Activated CD8-positive, alpha-beta T cell treated with anti-CD3 and anti-CD28 coated beads for 36 hours (primary cell): ENCODE measurements at regions of chr13 and their contacts with region 1.

Region 1: DNA sequence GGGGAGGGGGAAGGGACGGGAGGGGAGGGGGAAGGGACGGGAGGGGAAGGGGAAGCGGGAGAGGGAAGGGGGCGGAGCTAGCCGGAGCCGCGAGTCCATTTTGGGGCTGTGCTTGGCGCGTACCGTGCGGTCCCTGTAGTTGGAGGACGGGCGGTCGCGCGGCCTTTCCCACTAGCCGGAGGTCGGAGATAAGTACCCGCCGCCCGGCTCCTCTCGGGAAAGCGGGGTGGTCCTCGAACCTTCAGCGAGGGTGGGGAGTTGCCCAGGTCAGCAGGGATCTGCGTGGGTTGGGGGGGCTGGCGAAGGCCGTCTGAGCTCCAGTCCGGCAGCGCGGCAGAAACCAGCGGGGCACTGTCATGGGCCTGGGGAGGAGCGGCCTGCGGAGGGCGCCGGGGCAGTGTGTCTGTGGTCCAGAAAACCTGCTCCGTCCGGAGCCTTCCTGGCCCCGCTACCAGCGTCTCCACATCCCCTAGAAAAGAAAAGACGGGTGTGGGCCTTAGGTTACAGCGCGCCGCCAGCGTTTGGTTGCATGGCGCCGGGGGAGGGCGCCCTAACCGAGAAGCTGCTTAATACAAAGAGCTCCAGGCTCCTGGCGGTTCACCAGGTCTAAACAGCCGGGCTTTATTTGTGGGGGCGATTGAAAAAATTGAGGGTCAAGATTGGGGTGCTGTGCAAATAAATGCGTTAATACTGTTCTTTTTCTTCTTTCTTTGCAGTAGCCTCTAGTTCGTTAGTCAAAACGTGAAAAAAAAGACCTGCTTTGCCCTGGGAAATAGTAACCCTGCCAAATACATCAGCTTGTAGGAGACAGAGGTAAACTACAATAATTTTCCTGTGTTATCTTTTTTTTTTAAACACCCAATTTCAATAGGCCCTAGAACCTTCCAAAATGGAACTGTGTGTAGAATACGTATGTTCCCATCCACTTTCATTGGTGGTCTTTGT is at the start of gene TRIM13:
- DNase-seq: peak; percentile 91
- ATAC-seq: peak; percentile 86
- H3K4me3 Mint-ChIP-seq: peak within 1 kb of the TSS; percentile 86
- H3K27ac Mint-ChIP-seq: peak within 1 kb of the TSS; percentile 91
- H3K4me1 Mint-ChIP-seq: peaks cover 32% of the 10 kb centered on the region
- H3K27me3 Mint-ChIP-seq: no peaks in the 10 kb centered on the region
- CTCF ChIP-seq: peak; percentile 80
- total RNA-seq, gene TRIM13: 12.5 to 13.4 TPM

Region 2: GRCh38 chr13:49585220-49586157 is 411.7 kb before region 1 on chr13 and contains the start of gene RCBTB1:
- CTCF ChIA-PET with region 1: no interaction called
- POLR2A ChIA-PET with region 1: no interaction called
- intact Hi-C with region 1: no loop called
- DNase-seq: peak; percentile 66
- ATAC-seq: peak; percentile 92
- H3K4me3 Mint-ChIP-seq: peak within 1 kb of the TSS; percentile 91
- H3K27ac Mint-ChIP-seq: peak within 1 kb of the TSS; percentile 86
- H3K4me1 Mint-ChIP-seq: peaks cover 23% of the 10 kb centered on the region
- H3K27me3 Mint-ChIP-seq: no peaks in the 10 kb centered on the region
- CTCF ChIP-seq: no peak
- total RNA-seq, gene RCBTB1: 14.2 to 14.6 TPM

Region 3: GRCh38 chr13:49936085-49936940 is 60.9 kb before region 1 on chr13 and contains the start of gene SPRYD7:
- CTCF ChIA-PET with region 1: interaction called, 12 read pairs
- POLR2A ChIA-PET with region 1: interaction called, 7 read pairs
- intact Hi-C with region 1: no loop called
- DNase-seq: peak; percentile 96
- ATAC-seq: peak; percentile 99
- H3K4me3 Mint-ChIP-seq: peak within 1 kb of the TSS; percentile 80
- H3K27ac Mint-ChIP-seq: peak within 1 kb of the TSS; percentile 85
- H3K4me1 Mint-ChIP-seq: peaks cover 13% of the 10 kb centered on the region
- H3K27me3 Mint-ChIP-seq: peaks cover 1% of the 10 kb centered on the region
- CTCF ChIP-seq: peak; percentile 89
- total RNA-seq, gene SPRYD7: 6.3 to 6.7 TPM

Region 4: GRCh38 chr13:49976314-49977258 is 20.6 kb before region 1 on chr13:
- CTCF ChIA-PET with region 1: interaction called, 12 read pairs
- POLR2A ChIA-PET with region 1: no interaction called
- intact Hi-C with region 1: no loop called
- DNase-seq: peak; percentile 83
- ATAC-seq: peak; percentile 85
- H3K4me3 Mint-ChIP-seq: no peak overlapping the region
- H3K27ac Mint-ChIP-seq: no peak overlapping the region
- H3K4me1 Mint-ChIP-seq: peaks cover 2% of the 10 kb centered on the region
- H3K27me3 Mint-ChIP-seq: no peaks in the 10 kb centered on the region
- CTCF ChIP-seq: peak; percentile 89

Region 5: DNA sequence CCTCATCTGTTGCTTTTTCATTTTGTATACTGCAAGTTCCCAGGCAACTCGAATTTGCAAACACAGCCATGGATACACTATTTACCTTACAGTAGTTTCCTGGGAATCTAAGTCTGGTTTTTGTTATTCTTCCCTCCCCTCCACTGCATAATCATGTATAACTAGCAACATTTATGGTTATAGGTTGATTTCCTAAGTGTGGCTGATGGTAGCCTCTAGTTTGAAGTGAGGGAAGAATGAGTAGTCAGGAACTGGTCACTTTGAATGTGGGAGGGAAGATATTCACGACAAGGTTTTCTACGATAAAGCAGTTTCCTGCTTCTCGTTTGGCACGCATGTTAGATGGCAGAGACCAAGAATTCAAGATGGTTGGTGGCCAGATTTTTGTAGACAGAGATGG is 18.0 kb after region 1 on chr13 and contains the start of gene KCNRG:
- CTCF ChIA-PET with region 1: interaction called, 14 read pairs
- POLR2A ChIA-PET with region 1: interaction called, 10 read pairs
- intact Hi-C with region 1: no loop called
- DNase-seq: no peak
- ATAC-seq: no peak
- H3K4me3 Mint-ChIP-seq: no peak within 1 kb of the TSS
- H3K27ac Mint-ChIP-seq: peak within 1 kb of the TSS; percentile 44
- H3K4me1 Mint-ChIP-seq: peaks cover 23% of the 10 kb centered on the region
- H3K27me3 Mint-ChIP-seq: no peaks in the 10 kb centered on the region
- CTCF ChIP-seq: no peak
- total RNA-seq, gene KCNRG: 0.18 to 0.36 TPM

Region 6: GRCh38 chr13:50075619-50076097 is 78.4 kb after region 1 on chr13:
- CTCF ChIA-PET with region 1: interaction called, 29 read pairs
- POLR2A ChIA-PET with region 1: interaction called, 32 read pairs
- intact Hi-C with region 1: loop called (anchors 2 kb)
- DNase-seq: no peak
- ATAC-seq: no peak
- H3K4me3 Mint-ChIP-seq: peak overlapping the region; percentile 26
- H3K27ac Mint-ChIP-seq: no peak overlapping the region
- H3K4me1 Mint-ChIP-seq: peaks cover 22% of the 10 kb centered on the region
- H3K27me3 Mint-ChIP-seq: peaks cover 13% of the 10 kb centered on the region
- CTCF ChIP-seq: no peak

Region 7: DNA sequence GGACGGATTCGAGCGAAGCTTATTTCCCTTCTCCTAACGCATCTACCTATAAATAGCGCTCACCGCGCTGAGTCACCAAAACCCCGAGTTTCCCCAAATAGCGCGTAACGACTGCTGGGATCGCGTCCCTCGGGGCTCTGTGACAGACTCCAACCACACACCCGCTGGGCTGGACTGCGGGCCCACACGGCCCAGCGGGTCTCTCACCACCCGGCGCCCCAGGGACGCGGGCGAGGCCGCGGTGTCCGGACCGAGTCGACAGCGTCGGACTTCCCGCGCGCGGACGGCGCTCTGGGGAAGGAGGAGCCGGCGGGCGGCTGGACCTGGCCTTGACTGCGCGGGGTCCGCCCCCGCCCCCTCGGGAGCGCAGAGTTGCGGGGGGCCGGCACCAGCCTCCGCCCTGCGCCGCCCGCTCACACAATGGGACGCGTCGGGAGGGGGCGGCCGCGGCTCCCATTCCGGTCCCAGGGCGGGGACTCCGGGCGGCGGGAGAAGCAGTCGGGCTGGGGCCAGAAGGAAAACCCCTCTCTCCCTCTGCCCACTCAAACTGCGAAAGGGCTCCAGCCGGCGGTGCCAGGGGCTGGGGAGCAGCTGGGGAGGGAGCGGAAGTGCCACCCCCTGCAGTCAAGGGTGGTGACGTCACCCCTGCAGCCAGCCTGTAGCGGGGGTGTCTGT is 126.8 kb after region 1 on chr13:
- CTCF ChIA-PET with region 1: interaction called, 9 read pairs
- POLR2A ChIA-PET with region 1: interaction called, 9 read pairs
- intact Hi-C with region 1: loop called (anchors 5 kb)
- DNase-seq: peak; percentile 95
- ATAC-seq: peak; percentile 72
- H3K4me3 Mint-ChIP-seq: peak overlapping the region; percentile 80
- H3K27ac Mint-ChIP-seq: peak overlapping the region; percentile 88
- H3K4me1 Mint-ChIP-seq: peaks cover 44% of the 10 kb centered on the region
- H3K27me3 Mint-ChIP-seq: peaks cover 13% of the 10 kb centered on the region
- CTCF ChIP-seq: no peak

Region 8: DNA sequence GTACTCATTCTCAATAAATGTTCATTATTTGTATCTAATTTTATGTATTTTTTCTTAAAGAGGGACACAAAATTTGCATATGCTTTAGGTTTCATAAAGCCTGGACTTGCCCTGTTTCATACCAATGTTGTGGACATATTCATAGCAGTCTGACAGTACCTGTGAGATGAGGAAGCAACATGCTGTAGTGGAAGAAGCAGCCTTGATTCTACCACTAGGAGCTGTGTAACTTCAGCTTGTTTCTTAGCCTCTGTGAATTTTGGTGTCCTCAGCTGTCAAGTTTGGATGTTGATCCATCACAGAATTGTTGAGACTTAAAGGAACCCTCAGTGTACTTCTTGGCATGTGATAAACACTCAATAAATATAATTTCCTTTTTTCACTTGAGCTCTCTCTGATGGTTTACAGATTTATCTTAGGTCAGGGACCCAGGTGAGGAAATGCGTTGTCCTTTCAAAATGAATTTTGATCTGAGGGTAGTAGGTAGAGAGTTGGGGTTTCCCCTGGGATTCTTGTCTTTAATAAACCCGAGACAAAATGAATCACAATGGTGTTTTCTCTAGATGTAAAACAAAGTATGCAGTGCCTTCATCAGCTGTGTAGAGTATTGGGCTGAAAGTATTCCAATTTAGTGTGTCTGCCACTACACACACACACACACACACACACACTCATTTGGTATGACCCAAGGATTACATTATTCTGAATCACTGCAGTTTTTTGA is 170.2 kb after region 1 on chr13:
- CTCF ChIA-PET with region 1: no interaction called
- POLR2A ChIA-PET with region 1: no interaction called
- intact Hi-C with region 1: no loop called
- DNase-seq: no peak
- ATAC-seq: peak; percentile 90
- H3K4me3 Mint-ChIP-seq: no peak overlapping the region
- H3K27ac Mint-ChIP-seq: no peak overlapping the region
- H3K4me1 Mint-ChIP-seq: peaks cover 9% of the 10 kb centered on the region
- H3K27me3 Mint-ChIP-seq: peaks cover 7% of the 10 kb centered on the region
- CTCF ChIP-seq: no peak